Activated CD4-positive, alpha-beta memory T cell treated with anti-CD3 and anti-CD28 coated beads for 36 hours (primary cell): ENCODE measurements at regions of chr5 and their contacts with region 1.

Region 1: GRCh38 chr5:178279725-178280438 is 47.3 kb upstream of the PHYKPL start:
- DNase-seq: peak; percentile 73
- H3K4me3 Mint-ChIP-seq: no peak overlapping the region
- H3K27ac Mint-ChIP-seq: no peak overlapping the region
- H3K4me1 Mint-ChIP-seq: peaks cover 2% of the 10 kb centered on the region
- H3K27me3 Mint-ChIP-seq: peaks cover 12% of the 10 kb centered on the region

Region 2: GRCh38 chr5:178551059-178551458 is 271.2 kb after region 1 on chr5:
- CTCF ChIA-PET with region 1: interaction called, 30 read pairs
- POLR2A ChIA-PET with region 1: no interaction called
- intact Hi-C with region 1: loop called (anchors 1 kb)
- DNase-seq: no peak
- H3K4me3 Mint-ChIP-seq: no peak overlapping the region
- H3K27ac Mint-ChIP-seq: no peak overlapping the region
- H3K4me1 Mint-ChIP-seq: no peaks in the 10 kb centered on the region
- H3K27me3 Mint-ChIP-seq: peaks cover 11% of the 10 kb centered on the region

Region 3: DNA sequence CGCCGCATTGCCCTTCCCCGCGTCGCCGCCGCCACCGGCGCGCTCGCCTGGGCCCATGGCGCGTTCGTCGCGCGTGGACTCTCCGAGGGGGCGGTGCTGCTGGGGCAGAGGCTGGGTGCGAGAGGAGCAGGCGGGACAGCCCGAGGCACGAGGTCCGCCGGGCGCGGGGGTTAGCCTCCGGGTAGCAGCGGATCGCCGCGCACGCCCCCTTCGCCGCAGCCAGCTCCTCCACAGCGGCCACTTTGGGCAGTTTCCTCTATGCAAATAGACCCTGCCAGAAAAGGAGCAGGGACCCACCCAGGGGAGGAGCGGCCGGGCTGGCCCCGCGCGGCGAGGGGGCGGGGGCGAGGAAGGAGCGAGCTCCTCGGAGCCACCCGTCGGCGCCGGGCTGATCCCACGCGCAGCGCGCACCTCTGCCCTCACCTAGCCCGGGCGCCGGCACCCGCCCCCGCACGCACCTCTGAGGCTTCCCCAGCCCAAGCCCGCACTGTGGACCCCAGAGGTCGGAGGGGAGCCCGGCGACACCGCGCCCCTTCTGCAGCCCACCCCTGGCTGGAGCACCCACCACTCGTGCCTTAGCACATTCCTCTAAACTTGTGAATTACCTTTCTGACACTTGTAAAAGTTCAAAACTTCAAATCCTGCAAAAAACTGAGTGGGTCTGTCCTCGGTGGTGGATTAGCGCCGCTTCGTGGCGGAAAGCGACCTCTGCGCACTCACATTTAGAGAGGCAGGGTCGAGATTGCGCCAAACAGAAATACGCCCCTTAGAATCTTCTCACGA is 310.4 kb after region 1 on chr5 and contains the start of gene COL23A1:
- CTCF ChIA-PET with region 1: interaction called, 6 read pairs
- POLR2A ChIA-PET with region 1: no interaction called
- intact Hi-C with region 1: loop called (anchors 2 kb)
- DNase-seq: peak; percentile 49
- H3K4me3 Mint-ChIP-seq: peak within 1 kb of the TSS; percentile 37
- H3K27ac Mint-ChIP-seq: no peak within 1 kb of the TSS
- H3K4me1 Mint-ChIP-seq: peaks cover 5% of the 10 kb centered on the region
- H3K27me3 Mint-ChIP-seq: peaks cover 41% of the 10 kb centered on the region
- total RNA-seq, gene COL23A1: 0.15 TPM in 1 of 2 experiments, not detected in the other

Region 4: GRCh38 chr5:178838695-178839685 is 559.1 kb after region 1 on chr5:
- CTCF ChIA-PET with region 1: no interaction called
- POLR2A ChIA-PET with region 1: no interaction called
- intact Hi-C with region 1: loop called (anchors 5 kb)
- DNase-seq: peak; percentile 71
- H3K4me3 Mint-ChIP-seq: no peak overlapping the region
- H3K27ac Mint-ChIP-seq: no peak overlapping the region
- H3K4me1 Mint-ChIP-seq: no peaks in the 10 kb centered on the region
- H3K27me3 Mint-ChIP-seq: peaks cover 2% of the 10 kb centered on the region

Region 5: GRCh38 chr5:179495906-179496455 is 1216.1 kb after region 1 on chr5:
- CTCF ChIA-PET with region 1: interaction called, 10 read pairs
- POLR2A ChIA-PET with region 1: no interaction called
- intact Hi-C with region 1: loop called (anchors 5 kb)
- DNase-seq: no peak
- H3K4me3 Mint-ChIP-seq: no peak overlapping the region
- H3K27ac Mint-ChIP-seq: no peak overlapping the region
- H3K4me1 Mint-ChIP-seq: no peaks in the 10 kb centered on the region
- H3K27me3 Mint-ChIP-seq: no peaks in the 10 kb centered on the region